ENCODE measurements at regions of chr1 and their contacts with region 1.

Region 1: GRCh38 chr1:151098126-151098525 is 27.6 kb downstream of the GABPB2 start:
- DNase-seq: no peak
- CTCF ChIP-seq: no peak

Region 2: DNA sequence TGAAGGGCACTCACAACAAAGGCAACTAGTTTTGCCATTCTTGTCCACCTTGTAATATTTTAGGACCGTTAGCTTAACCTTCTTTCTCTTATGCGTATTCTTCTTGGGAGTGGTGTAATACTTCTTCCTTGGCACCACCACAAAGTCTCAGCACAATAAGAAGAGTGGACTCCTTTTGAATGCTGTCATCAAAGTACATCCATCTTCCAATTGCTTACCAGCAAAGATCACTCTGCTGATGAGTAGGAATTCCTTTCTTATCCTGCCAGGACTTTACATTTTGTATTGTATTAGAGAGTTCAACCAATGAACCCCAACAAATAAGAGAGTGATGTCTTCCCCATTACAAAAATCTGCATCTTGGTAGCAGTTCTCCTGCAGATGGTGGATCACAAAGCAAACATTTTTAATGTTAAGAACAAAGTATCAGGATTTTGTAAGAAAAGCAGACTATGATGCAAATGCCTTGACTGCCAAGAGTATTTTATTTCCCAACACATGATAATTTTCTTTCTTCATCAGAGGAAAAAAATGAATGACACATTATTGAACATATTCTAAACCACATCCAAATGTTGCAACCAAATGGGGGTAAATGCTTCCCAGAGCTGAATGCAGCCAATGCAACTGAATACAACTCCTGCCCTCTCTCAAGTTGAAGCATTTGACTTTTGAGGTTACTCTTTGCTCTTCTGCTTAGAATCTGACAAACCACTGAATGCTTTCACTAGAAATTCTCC is 216.6 kb before region 1 on chr1:
- CTCF ChIA-PET with region 1: no interaction called
- POLR2A ChIA-PET with region 1: no interaction called
- DNase-seq: no peak
- CTCF ChIP-seq: no peak

Region 3: GRCh38 chr1:151085953-151086559 is 12.1 kb before region 1 on chr1:
- CTCF ChIA-PET with region 1: interaction called, 31 read pairs
- POLR2A ChIA-PET with region 1: no interaction called
- DNase-seq: no peak
- CTCF ChIP-seq: no peak

Region 4: DNA sequence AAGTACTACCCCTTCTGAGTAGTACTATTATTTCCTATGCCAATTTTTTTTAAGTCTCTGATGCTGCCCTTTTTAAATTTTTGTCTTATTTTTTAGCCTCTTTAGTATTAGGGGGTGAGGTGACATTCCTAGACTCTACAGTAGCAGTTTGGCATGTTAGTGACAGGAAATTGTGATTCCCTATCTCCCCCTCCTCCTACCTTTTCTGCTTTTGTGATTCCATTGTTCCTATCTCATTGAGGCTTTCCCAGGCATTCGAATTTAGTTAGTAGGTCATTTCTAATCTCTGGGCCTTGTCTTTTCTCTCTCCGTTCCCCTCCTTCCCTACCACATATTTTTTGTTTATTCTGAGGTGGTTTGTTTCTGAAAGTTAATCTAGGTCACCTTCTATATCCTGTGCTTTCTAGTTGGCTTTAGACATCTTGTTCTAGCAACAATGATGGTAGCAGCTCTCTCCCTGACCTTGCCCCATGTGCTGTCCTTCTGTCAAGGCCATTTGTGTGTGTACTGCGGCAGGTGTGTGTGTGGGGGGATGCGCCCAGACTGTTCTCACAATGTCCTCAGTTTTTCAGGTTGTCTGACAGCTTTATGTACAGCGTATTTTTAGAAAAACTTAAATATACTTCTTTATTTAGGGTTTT is 26.8 kb after region 1 on chr1:
- CTCF ChIA-PET with region 1: interaction called, 19 read pairs
- POLR2A ChIA-PET with region 1: no interaction called
- DNase-seq: no peak
- CTCF ChIP-seq: no peak

Region 5: DNA sequence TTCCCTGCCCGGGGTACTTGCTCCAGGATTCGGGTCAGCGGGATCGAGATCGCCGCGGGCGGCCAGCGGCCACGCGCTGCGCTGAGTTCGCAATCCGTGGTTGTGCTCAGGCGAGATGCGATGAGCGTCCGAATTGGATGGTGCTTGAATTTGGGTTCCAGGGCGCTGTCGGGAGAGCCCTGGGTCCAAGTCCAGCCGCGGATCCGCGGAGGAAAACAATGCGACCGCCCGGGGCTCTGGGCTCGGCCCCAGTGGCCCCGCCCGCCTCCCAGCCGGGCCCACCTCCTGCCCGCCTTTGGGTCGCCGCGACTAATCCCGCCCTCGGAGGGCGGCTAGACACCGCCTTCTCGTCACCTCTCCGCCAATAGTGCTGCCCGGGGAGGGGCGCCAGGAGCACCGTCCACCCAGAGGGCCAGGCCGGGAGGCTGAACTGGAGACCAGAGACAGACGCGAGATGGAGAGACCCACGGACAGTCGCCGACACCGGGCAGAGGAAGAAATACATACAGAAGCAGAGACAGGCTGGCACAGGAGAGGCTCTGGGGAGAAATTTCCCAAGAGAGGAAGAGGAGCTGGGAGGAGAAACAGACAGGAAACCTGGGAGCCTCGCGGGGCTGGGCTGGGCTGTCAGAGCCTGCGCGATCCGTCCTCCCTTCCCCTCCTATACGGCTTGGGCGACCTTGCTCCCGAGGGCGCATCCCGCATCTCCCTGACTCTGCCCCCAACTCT is 48.5 kb after region 1 on chr1 and contains the start of gene SEMA6C:
- CTCF ChIA-PET with region 1: interaction called, 19 read pairs
- POLR2A ChIA-PET with region 1: no interaction called
- DNase-seq: peak; percentile 94
- CTCF ChIP-seq: no peak

Region 6: GRCh38 chr1:151156515-151156819 is 58.3 kb after region 1 on chr1 and contains the start of gene TNFAIP8L2:
- CTCF ChIA-PET with region 1: interaction called, 218 read pairs
- POLR2A ChIA-PET with region 1: no interaction called
- DNase-seq: peak; percentile 73
- CTCF ChIP-seq: no peak

Region 7: DNA sequence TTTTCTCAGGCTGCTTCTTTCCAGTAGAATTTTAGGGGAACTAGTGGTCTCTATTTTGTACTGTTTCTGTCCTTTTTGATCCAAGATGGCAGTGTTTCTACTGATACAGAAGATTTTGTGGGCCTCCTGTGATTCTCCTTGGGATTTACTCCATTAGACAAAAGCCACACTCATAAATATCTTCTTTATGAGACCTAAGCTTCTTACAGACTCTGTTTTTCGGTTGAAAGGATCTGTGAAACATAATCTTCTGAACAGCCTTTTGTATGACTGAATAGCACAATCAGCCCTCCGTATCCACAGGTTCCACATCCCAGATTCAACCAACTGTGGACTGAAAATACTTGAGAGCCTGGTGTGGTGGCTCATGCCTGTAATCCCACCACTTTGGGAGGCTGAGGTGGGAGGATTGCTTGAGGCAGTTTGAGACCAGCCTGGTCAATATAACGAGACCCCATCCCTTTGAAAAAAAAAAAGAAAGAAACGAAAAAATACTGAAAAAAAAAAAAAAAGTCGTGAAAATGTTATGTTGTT is 145.6 kb after region 1 on chr1:
- CTCF ChIA-PET with region 1: no interaction called
- POLR2A ChIA-PET with region 1: no interaction called
- DNase-seq: no peak
- CTCF ChIP-seq: no peak